PC-9 (cell line): ENCODE measurements at regions of chr2 and their contacts with region 1.

Region 1: GRCh38 chr2:171056307-171056706 is 104.4 kb downstream of the TLK1 start:
- DNase-seq: no peak
- H3K4me3 ChIP-seq: no peak overlapping the region
- H3K27ac ChIP-seq: no peak overlapping the region
- H3K4me1 ChIP-seq: no peaks in the 10 kb centered on the region
- H3K27me3 ChIP-seq: no peaks in the 10 kb centered on the region
- CTCF ChIP-seq: no peak

Region 2: DNA sequence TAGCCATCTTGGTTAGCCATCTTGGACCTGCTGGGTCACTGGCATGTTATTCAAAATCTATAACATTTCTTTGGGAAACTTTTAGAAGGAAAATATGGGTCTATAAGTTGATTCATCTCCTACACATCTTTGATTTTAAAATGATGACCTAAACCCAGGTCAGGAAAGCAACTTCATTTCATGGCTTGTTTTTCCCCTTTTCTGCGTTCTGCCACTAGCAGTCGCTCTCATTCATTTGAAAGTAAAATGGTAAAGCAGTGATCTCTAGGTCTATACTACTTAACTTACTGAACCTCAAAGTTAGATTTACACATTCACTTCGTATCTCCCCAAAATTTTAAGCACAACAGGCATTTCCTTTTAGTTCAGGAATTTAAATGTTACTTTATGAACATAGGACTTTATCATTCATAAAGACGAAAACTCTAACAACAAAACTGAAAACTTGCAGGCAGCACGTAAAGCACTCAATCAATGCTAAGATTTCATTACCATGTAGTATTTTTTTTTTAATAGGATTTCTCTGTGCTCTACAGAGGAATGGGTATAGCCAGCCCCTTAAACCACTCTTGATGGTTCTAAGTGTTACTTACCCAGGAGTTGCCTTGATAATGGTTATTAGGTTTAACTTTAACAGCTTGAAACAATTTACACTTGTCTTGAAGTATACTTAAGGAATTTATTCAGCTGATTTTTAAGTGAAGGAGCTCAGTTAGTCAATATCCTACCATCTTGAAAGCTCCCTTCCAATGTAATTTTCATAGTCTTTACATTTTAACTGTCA is 64.7 kb before region 1 on chr2:
- CTCF ChIA-PET with region 1: no interaction called
- POLR2A ChIA-PET with region 1: no interaction called
- intact Hi-C with region 1: no loop called
- DNase-seq: no peak
- H3K4me3 ChIP-seq: no peak overlapping the region
- H3K27ac ChIP-seq: no peak overlapping the region
- H3K4me1 ChIP-seq: no peaks in the 10 kb centered on the region
- H3K27me3 ChIP-seq: no peaks in the 10 kb centered on the region
- CTCF ChIP-seq: no peak

Region 3: GRCh38 chr2:171541202-171541887 is 485.0 kb after region 1 on chr2:
- CTCF ChIA-PET with region 1: no interaction called
- POLR2A ChIA-PET with region 1: no interaction called
- intact Hi-C with region 1: loop called (anchors 1 kb)
- DNase-seq: peak in 1 of 2 experiments; percentile 47
- H3K4me3 ChIP-seq: no peak overlapping the region
- H3K27ac ChIP-seq: no peak overlapping the region
- H3K4me1 ChIP-seq: no peaks in the 10 kb centered on the region
- H3K27me3 ChIP-seq: no peaks in the 10 kb centered on the region
- CTCF ChIP-seq: peak; percentile 90

Region 4: GRCh38 chr2:172373766-172374165 is 1317.5 kb after region 1 on chr2:
- CTCF ChIA-PET with region 1: no interaction called
- POLR2A ChIA-PET with region 1: no interaction called
- intact Hi-C with region 1: loop called (anchors 2 kb)
- DNase-seq: no peak
- H3K4me3 ChIP-seq: no peak overlapping the region
- H3K27ac ChIP-seq: no peak overlapping the region
- H3K4me1 ChIP-seq: no peaks in the 10 kb centered on the region
- H3K27me3 ChIP-seq: no peaks in the 10 kb centered on the region
- CTCF ChIP-seq: no peak